GM10248 (cell line): ENCODE measurements at regions of chr5 and their contacts with region 1.

Region 1: DNA sequence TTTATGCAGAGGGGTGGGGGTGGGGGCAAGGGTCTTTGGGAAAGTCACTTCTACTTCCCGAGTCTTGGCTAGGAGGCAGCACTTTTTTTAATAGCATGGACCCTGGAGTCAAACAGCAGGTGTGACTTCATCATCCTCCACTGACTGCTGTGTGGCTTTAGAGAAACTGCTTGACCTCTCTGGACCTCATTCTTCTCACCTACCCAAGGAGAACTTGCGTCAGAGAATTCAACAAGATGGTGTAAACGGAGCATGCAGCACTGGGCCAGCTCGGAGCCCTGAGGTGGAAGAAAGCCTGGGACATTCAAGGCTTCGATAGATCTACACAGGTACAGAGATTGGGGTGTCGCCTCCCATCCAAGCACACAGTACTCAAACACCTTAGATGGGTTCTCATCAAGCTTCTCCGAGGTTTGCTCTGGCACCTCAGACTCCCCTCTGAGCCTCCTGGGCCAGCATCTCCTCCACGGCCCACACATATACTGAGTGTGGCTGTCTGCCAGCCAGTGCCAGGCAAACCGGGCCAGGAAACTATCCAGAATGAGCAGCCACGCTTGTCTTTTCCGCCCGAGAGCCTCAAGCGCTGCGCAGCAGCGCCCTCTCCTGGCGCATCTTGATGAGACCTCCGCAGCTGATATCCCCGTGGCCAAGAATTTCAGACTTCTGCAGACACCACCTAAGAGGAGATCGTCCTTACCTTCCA is 4.6 kb upstream of the SLC25A48 start:
- DNase-seq: peak; percentile 67
- CTCF ChIP-seq: peak; percentile 60

Region 2: DNA sequence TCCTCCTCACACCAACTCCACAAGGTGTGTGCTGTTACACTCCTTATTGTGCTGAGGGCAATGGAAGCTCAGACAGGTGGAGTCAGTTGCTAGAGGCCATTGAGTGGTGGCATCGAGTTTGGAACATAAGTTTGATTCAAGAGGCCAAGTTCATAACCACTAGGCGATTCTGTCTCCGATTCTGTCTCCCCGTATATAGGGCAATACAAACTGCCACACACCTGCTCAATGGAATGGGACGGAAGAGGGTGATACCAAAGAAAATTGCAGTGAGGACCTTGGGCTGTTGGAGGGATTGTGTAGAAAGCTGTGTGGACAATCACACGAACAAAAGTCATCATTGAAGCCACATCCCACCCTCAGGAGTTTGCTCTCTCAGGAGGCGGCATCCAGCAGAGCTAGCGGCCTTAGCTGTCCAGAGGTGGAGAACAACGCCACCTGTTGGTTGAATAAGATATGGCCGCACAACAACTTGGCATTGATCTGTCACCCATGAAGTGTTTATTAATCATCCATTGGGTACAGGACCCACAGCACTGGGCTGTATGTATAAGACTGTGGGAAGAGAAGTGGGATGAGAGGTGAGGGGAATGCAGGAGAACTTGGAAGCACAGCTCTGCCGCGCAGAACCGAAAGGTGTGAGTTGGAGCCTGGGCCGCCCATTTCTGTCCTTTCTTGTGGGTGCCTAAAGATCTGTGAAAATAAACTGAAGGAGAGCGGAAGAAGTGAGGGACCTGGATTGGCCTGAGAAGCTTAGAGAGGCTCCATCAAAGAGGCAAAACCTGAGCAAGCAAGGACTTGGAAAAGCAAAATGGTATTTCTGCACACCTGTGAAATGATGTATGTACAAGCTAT is 278.0 kb before region 1 on chr5:
- CTCF ChIA-PET with region 1: interaction called, 14 read pairs
- POLR2A ChIA-PET with region 1: no interaction called
- DNase-seq: peak; percentile 75
- CTCF ChIP-seq: peak; percentile 69

Region 3: DNA sequence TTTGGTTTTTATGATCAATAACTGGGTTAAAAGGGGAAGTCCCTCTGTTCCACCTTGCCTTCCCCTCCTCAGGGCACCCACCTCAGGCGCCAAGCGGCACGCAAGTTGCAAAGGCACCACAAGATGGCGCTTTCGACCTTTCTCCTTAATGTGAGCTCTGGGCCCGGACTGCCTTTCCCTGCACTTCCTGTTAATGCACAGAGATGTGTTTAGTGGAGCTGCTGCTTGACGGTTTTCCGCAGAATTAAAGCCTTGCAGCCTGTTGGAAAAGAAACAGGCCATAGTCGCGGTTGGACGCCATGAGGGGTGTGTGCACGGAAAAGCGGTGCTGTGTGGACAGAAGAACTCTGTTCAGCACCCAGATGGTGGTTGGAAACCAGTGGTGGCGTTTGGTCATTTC is 269.0 kb before region 1 on chr5:
- CTCF ChIA-PET with region 1: interaction called, 77 read pairs
- POLR2A ChIA-PET with region 1: no interaction called
- DNase-seq: peak; percentile 80
- CTCF ChIP-seq: peak; percentile 81

Region 4: DNA sequence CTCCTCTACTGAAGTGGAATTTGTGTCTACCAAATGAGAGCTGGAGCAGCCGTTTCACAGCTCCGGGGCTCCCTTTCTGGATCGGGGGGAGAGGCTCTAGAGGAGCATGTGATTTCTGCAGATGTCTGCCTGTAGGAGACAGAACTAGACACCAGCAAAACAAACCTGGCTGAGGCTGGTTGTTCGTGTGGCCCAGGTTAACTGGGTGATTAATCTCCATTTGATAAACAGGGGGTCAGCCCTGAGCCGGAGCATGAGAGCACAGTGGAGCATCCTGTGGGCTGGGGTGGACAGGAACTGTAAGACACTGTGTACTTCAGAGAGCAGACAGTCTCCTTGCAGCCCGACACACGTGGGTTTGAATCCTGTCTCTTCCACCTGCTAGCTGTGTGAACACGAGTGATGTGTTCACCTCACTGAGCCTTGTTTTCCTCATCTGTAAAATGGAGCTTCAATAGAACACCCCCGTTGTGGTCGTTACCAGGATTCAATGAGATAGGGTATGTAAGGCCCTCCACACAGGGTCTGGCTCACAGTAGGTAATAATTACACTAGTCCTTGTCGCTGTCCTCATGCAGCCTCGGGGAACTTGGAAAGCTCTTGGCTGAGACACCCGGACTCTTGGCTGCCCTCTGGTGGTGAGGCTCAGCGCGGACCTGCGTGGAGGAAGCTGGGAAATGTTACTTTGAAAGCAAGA is 264.0 kb before region 1 on chr5:
- CTCF ChIA-PET with region 1: interaction called, 77 read pairs
- POLR2A ChIA-PET with region 1: no interaction called
- DNase-seq: peak; percentile 75
- CTCF ChIP-seq: peak; percentile 90

Region 5: DNA sequence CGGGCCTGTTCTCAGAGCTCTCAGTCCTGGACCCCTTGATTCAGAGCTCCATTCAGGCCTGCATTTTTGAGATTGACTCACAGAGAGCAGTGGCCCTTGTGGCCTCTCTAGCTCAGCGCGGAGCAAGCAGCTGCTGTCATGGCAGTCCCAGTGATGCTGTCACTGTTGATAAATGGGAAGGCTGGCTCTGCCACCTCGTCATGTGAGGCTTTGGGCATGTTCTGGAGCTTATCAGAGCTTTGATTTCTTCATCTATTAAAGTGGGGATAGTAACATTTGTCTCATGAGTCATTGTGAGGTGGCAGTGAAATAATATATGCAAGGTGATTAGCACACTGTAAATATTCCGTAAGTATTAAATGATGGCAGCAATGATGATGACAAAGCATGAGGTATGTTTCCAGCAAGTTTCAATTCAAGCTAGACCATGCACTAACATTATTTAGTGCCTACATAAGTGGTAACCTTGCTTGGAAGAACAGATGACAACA is 124.6 kb before region 1 on chr5:
- CTCF ChIA-PET with region 1: no interaction called
- POLR2A ChIA-PET with region 1: no interaction called
- DNase-seq: no peak
- CTCF ChIP-seq: no peak

Region 6: DNA sequence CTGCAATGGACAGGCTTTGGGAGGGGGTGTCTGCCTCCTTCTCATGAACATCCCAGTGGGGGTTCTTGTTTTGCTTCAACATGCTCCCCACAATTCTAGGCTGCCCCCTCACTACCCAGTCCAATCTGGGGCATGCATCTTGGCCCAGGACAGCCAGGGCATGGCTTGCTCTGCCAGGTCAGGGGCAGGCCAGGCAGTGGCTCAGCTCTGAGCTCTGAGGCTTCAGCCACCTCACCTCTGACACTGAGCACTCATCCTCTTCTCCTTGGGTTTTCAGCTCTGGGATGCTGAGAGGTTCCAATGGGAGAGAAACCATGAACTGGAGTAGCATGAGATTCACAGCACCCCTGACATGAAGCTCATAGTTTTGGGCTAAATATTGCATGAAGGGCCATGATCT is 16.5 kb after region 1 on chr5:
- CTCF ChIA-PET with region 1: interaction called, 11 read pairs
- POLR2A ChIA-PET with region 1: no interaction called
- DNase-seq: no peak
- CTCF ChIP-seq: no peak

Region 7: DNA sequence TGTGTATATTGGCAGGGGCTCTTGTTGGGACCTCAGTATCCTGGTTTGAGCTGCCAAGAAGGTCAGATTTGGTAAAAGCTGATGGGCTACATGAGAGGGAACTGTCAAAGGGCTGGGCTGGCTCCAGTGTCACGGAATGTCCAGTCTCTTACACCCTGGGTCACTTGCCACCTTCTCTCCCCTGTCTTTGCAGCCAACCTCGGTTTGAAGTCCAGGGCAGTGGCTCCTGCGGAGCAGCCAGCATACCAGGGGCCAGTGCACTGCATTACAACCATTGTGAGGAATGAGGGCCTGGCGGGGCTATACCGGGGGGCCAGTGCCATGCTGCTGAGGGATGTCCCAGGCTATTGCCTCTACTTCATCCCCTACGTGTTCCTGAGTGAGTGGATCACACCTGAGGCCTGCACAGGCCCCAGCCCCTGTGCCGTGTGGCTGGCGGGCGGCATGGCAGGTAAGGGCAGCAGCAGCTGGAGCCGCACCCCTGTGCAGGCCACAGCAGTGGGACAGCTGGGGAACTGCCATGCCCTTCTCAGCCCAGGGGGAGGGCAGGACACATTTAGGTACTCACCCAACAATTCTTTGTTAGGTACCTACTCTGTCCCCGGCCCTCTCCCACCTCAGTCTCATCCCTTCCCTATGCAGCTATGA is 41.6 kb after region 1 on chr5:
- CTCF ChIA-PET with region 1: interaction called, 14 read pairs
- POLR2A ChIA-PET with region 1: no interaction called
- DNase-seq: no peak
- CTCF ChIP-seq: no peak